Naive thymus-derived CD4-positive, alpha-beta T cell (primary cell): ENCODE measurements at regions of chr11 and their contacts with region 1.

Region 1: GRCh38 chr11:125568970-125569914 is at the start of gene EI24:
- DNase-seq: peak; percentile 73 to 89 (median 81)
- ATAC-seq: peak; percentile 99
- H3K4me3 ChIP-seq: peak within 1 kb of the TSS; percentile 90
- H3K4me3 Mint-ChIP-seq: peak within 1 kb of the TSS; percentile 90 to 97 (median 94)
- H3K27ac ChIP-seq: peak within 1 kb of the TSS; percentile 90
- H3K27ac Mint-ChIP-seq: peak within 1 kb of the TSS; percentile 78 to 96 (median 91)
- H3K4me1 ChIP-seq: peaks cover 13 to 16% of the 10 kb centered on the region in 2 donors
- H3K4me1 Mint-ChIP-seq: peaks cover 12 to 38% (median 26%) of the 10 kb centered on the region in 7 donors
- H3K27me3 ChIP-seq: no peaks in the 10 kb centered on the region
- H3K27me3 Mint-ChIP-seq: no peaks in the 10 kb centered on the region
- total RNA-seq, gene EI24: 21.3 to 42.7 (median 35.7) TPM

Region 2: GRCh38 chr11:124746621-124747243 is 822.5 kb before region 1 on chr11:
- CTCF ChIA-PET with region 1: no interaction called
- POLR2A ChIA-PET with region 1: no interaction called
- intact Hi-C with region 1: loop called in 1 of 2 experiments (anchors 5 kb)
- DNase-seq: peak; percentile 66 to 88 (median 85)
- ATAC-seq: peak; percentile 93
- H3K4me3 ChIP-seq: peak overlapping the region; percentile 99
- H3K4me3 Mint-ChIP-seq: peak overlapping the region; percentile 91 to 100 (median 98)
- H3K27ac ChIP-seq: peak overlapping the region; percentile 72
- H3K27ac Mint-ChIP-seq: peak overlapping the region; percentile 91 to 98 (median 96)
- H3K4me1 ChIP-seq: peaks cover 0 to 3% of the 10 kb centered on the region in 2 donors
- H3K4me1 Mint-ChIP-seq: peaks cover 4 to 37% (median 19%) of the 10 kb centered on the region in 7 donors
- H3K27me3 ChIP-seq: no peaks in the 10 kb centered on the region
- H3K27me3 Mint-ChIP-seq: peaks cover 0 to 22% (median 0%) of the 10 kb centered on the region in 5 donors

Region 3: GRCh38 chr11:124800226-124800929 is 768.9 kb before region 1 on chr11 and contains the start of gene MSANTD2:
- CTCF ChIA-PET with region 1: no interaction called
- POLR2A ChIA-PET with region 1: no interaction called
- intact Hi-C with region 1: loop called in 1 of 2 experiments (anchors 2 kb)
- DNase-seq: peak; percentile 65 to 89 (median 73)
- ATAC-seq: peak; percentile 92
- H3K4me3 ChIP-seq: peak within 1 kb of the TSS; percentile 71
- H3K4me3 Mint-ChIP-seq: peak within 1 kb of the TSS; percentile 88 to 97 (median 96)
- H3K27ac ChIP-seq: peak within 1 kb of the TSS; percentile 93
- H3K27ac Mint-ChIP-seq: peak within 1 kb of the TSS; percentile 88 to 98 (median 94)
- H3K4me1 ChIP-seq: peaks cover 8 to 14% of the 10 kb centered on the region in 2 donors
- H3K4me1 Mint-ChIP-seq: peaks cover 13 to 38% (median 32%) of the 10 kb centered on the region in 7 donors
- H3K27me3 ChIP-seq: no peaks in the 10 kb centered on the region
- H3K27me3 Mint-ChIP-seq: peaks cover 0 to 24% (median 0%) of the 10 kb centered on the region in 5 donors
- total RNA-seq, gene MSANTD2: 9.1 to 29.5 (median 14.4) TPM

Region 4: GRCh38 chr11:124855437-124855836 is 713.8 kb before region 1 on chr11:
- CTCF ChIA-PET with region 1: no interaction called
- POLR2A ChIA-PET with region 1: no interaction called
- intact Hi-C with region 1: no loop called
- DNase-seq: no peak
- ATAC-seq: no peak
- H3K4me3 ChIP-seq: no peak overlapping the region
- H3K4me3 Mint-ChIP-seq: no peak overlapping the region
- H3K27ac ChIP-seq: no peak overlapping the region
- H3K27ac Mint-ChIP-seq: no peak overlapping the region
- H3K4me1 ChIP-seq: no peaks in the 10 kb centered on the region
- H3K4me1 Mint-ChIP-seq: no peaks in the 10 kb centered on the region
- H3K27me3 ChIP-seq: no peaks in the 10 kb centered on the region
- H3K27me3 Mint-ChIP-seq: peaks cover 12 to 19% (median 14%) of the 10 kb centered on the region in 5 donors

Region 5: DNA sequence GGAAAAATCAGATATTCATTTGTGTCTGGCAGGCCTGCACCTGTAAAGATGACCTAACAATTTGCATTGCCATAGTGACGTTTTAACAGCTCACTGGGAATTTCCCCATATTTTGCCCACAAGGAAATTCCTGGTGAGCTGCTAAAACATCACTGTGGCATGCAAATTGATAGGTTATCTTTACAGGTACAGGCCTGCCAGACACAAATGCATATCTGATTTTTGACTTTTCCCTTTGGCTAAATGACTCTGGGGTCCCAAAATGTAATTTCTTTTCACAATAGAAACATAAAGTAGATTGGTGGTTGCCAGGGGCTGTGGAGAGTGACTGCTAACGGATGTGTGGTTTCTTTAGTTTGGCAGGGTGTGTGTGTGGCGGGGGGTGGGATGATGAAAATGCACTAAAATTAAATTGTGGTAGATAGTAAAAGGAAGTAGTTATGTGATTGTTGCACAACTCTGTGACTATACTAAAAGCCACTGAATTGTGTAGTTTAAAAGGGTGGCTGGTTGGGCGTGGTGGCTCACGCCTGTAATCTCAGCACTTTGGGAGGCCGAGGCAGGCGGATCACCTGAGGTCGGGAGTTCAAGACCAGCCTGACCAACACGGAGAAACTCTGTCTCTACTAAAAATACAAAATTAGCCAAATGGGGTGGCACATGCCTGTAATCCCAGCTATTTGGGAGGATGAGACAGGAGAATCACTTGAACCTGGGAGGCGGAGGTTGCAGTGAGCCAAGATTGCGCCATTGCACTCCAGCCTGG is 54.7 kb before region 1 on chr11:
- CTCF ChIA-PET with region 1: no interaction called
- POLR2A ChIA-PET with region 1: interaction called, 4 read pairs
- intact Hi-C with region 1: loop called (anchors 1 kb)
- DNase-seq: peak; percentile 16 to 72 (median 53)
- ATAC-seq: peak; percentile 87
- H3K4me3 ChIP-seq: no peak overlapping the region
- H3K4me3 Mint-ChIP-seq: peak overlapping the region; percentile 12 to 72 (median 44)
- H3K27ac ChIP-seq: peak overlapping the region; percentile 56
- H3K27ac Mint-ChIP-seq: peak overlapping the region; percentile 58 to 94 (median 85)
- H3K4me1 ChIP-seq: peaks cover 17 to 24% of the 10 kb centered on the region in 2 donors
- H3K4me1 Mint-ChIP-seq: peaks cover 30 to 47% (median 38%) of the 10 kb centered on the region in 7 donors
- H3K27me3 ChIP-seq: no peaks in the 10 kb centered on the region
- H3K27me3 Mint-ChIP-seq: no peaks in the 10 kb centered on the region

Region 6: GRCh38 chr11:125583496-125583895 is 14.3 kb after region 1 on chr11:
- CTCF ChIA-PET with region 1: no interaction called
- POLR2A ChIA-PET with region 1: interaction called, 12 read pairs
- intact Hi-C with region 1: no loop called
- DNase-seq: no peak
- ATAC-seq: no peak
- H3K4me3 ChIP-seq: no peak overlapping the region
- H3K4me3 Mint-ChIP-seq: no peak overlapping the region
- H3K27ac ChIP-seq: no peak overlapping the region
- H3K27ac Mint-ChIP-seq: no peak overlapping the region
- H3K4me1 ChIP-seq: no peaks in the 10 kb centered on the region
- H3K4me1 Mint-ChIP-seq: peaks cover 0 to 4% (median 0%) of the 10 kb centered on the region in 7 donors
- H3K27me3 ChIP-seq: no peaks in the 10 kb centered on the region
- H3K27me3 Mint-ChIP-seq: no peaks in the 10 kb centered on the region

Region 7: DNA sequence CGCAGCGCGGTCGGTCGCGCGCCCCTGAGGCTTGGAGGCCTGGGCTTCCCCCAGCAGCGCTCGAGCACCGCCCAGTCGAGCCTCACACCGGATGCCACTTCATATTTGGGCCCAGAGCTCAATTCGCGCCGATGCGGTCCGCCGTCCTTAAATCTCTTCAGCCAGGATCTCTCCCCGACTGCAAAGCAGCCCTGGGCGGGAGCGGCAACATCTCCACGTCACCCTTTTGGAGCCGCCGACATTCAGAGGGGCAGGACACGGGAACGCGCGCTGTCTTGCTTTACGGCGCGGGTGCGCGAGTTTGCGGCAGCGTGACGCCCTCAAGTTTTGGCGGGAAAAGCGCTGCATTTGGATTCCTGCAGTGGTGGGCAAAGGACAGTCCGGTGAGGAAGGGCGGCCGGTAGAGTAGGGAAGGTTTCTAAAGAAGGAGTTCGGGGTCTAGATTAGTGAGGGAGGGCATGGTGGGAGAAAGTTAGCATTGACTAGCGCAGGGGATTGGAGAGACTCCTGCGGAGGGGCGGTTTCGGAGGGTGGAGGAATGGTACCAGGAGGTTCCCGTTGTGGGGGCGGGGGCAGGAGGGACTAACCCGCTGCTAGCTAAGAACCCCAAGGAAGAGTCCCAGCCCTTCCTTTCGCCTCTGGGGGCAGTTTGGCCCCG is 56.5 kb after region 1 on chr11:
- CTCF ChIA-PET with region 1: interaction called, 3 read pairs
- POLR2A ChIA-PET with region 1: interaction called, 9 read pairs
- intact Hi-C with region 1: loop called (anchors 1 kb)
- DNase-seq: peak; percentile 70 to 87 (median 82)
- ATAC-seq: peak; percentile 95
- H3K4me3 ChIP-seq: peak overlapping the region; percentile 91
- H3K4me3 Mint-ChIP-seq: peak overlapping the region; percentile 82 to 99 (median 98)
- H3K27ac ChIP-seq: peak overlapping the region; percentile 96
- H3K27ac Mint-ChIP-seq: peak overlapping the region; percentile 64 to 99 (median 98)
- H3K4me1 ChIP-seq: peaks cover 0 to 5% of the 10 kb centered on the region in 2 donors
- H3K4me1 Mint-ChIP-seq: peaks cover 13 to 47% (median 15%) of the 10 kb centered on the region in 7 donors
- H3K27me3 ChIP-seq: no peaks in the 10 kb centered on the region
- H3K27me3 Mint-ChIP-seq: no peaks in the 10 kb centered on the region

Region 8: DNA sequence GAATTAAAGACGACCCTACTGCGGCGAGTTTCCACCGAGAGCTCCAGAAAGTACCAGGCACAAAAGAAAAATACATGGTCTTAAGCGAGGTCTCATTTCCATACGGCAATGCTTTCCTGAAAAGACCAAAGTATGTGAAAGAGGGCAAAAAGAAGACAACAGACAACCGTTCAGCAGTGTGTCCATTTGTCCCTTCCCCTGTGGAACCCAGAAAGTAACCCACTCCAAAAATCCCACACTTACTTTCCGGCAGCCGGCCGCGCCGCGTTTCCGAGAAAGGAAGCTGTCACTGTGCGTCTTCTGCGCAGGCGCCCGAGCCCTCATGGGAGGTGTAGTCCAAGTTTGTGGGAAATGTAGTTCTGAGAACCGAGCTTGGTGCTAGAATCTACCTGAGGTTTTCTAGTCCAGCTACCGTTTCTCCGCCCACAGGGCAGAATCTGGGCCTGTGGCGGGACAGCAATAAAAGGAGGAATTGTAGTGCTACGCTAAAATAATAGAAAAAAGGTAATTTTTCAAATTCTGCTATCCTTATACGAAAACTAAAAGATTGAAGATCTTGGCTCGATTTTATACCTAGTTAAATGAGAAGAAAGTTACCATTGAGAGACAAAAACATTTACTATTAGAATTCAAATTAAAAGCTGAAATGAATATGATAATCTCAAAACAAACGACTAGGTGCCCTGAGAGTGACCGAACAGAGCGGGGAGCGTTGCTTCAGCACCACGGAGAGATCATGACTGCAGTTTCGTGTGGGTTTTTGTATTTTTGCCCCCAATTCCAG is 333.9 kb after region 1 on chr11 and contains the start of gene PUS3:
- CTCF ChIA-PET with region 1: no interaction called
- POLR2A ChIA-PET with region 1: no interaction called
- intact Hi-C with region 1: loop called in 1 of 2 experiments (anchors 1 kb)
- DNase-seq: peak; percentile 73 to 88 (median 83)
- ATAC-seq: peak; percentile 96
- H3K4me3 ChIP-seq: peak within 1 kb of the TSS; percentile 91
- H3K4me3 Mint-ChIP-seq: peak within 1 kb of the TSS; percentile 82 to 98 (median 96)
- H3K27ac ChIP-seq: peak within 1 kb of the TSS; percentile 86
- H3K27ac Mint-ChIP-seq: peak within 1 kb of the TSS; percentile 83 to 96 (median 92)
- H3K4me1 ChIP-seq: peaks cover 7 to 13% of the 10 kb centered on the region in 2 donors
- H3K4me1 Mint-ChIP-seq: peaks cover 21 to 54% (median 39%) of the 10 kb centered on the region in 7 donors
- H3K27me3 ChIP-seq: peaks cover 0 to 4% of the 10 kb centered on the region in 2 donors
- H3K27me3 Mint-ChIP-seq: peaks cover 18 to 40% (median 29%) of the 10 kb centered on the region in 5 donors
- total RNA-seq, gene PUS3: 4.6 to 15.3 (median 9.3) TPM